Psoas muscle (tissue), 8 donors: ENCODE measurements at regions of chr17 and their contacts with region 1.

Region 1: DNA sequence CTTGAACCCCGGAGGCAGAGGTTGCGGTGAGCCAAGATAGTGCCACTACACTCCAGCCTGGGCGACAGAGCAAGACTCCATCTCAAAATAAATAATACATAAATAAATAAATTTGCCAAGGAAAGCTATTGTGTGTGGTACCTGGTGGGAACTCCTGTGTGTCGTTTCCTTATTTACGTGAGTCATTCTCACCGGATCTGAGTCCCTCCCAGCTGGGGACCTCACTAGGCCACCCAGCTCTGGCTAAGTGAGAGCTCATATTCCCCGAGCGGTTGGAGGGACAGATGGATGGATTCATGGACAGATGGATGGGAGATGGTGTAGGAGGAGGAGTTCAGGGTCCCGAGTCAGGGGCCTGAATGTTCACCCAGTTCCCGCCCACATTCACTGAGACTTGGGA is 22.9 kb upstream of the C1QL1 start:
- DNase-seq: no peak
- ATAC-seq: no peak
- H3K4me3 ChIP-seq: no peak overlapping the region
- H3K27ac ChIP-seq: no peak overlapping the region
- H3K4me1 ChIP-seq: no peaks in the 10 kb centered on the region
- H3K27me3 ChIP-seq: peaks cover 0 to 36% (median 2%) of the 10 kb centered on the region in 3 donors
- CTCF ChIP-seq: no peak

Region 2: DNA sequence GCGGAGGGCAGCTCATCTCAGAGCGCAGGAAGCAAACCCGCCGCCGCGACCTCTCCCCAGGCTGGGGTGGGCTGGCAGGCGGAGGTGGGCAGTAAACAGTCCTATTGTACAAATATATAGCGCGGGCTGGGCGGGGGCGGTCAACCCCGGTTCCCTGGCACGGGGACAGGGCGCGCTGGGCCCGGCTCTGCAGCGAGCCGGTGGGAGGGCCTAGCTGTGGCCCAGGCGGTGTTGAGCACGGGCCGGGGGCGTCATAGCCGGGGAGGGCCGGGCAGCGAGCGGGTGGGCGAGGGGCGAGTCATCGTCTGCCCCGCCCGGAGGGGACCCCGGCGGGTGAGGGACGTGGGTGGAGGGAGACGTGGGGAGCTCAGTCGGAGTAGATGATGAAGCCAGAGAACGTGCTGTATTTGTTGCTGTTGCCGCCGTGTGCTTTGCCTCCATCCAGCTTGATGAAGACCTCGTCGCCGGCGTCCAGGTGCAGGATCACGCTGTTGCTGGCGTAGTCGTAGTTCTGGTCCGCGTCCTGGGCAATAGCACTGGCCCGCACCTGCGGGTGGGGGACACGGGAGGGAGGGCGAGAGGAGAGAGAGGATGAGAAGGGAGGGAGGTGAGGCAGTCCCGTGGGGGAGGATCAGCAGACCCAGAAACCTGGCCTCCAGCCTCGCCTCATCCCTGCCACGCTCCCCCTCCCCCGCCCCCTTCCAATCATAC is 31.0 kb before region 1 on chr17:
- intact Hi-C with region 1: loop called in 1 of 2 experiments (anchors 5 kb)
- DNase-seq: no peak
- ATAC-seq: peak in 1 of 4 donors; percentile 33
- H3K4me3 ChIP-seq: peak overlapping the region; percentile 2
- H3K27ac ChIP-seq: no peak overlapping the region
- H3K4me1 ChIP-seq: no peaks in the 10 kb centered on the region
- H3K27me3 ChIP-seq: peaks cover 0 to 64% (median 11%) of the 10 kb centered on the region in 3 donors
- CTCF ChIP-seq: no peak